ENCODE measurements at regions of chr5 and their contacts with region 1.

Region 1: DNA sequence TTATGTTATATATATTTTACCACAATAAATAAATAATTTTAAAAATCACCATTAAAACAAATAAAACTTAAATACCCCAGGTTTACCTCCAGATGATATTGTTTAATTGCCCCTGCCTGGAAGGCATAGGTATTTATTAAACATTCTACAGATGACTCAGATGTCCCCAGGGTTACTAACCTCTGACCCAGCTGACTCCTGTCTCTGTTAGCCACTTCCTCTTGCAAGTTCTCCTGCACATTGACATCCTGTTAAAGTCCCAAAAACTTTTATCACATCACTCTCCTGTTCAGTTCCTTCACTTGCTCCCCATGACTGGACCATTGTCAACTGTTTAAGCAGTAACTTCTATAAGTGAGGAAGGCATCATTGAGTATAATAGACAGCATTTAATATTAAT is 37.0 kb upstream of the RAB3C start:
- DNase-seq: peak; percentile 17
- ATAC-seq: peak; percentile 67
- H3K4me3 ChIP-seq: no peak overlapping the region
- H3K4me3 Mint-ChIP-seq: peak overlapping the region; percentile 15
- H3K27ac ChIP-seq: no peak overlapping the region
- H3K27ac Mint-ChIP-seq: no peak overlapping the region
- H3K4me1 ChIP-seq: peaks cover 34 to 38% of the 10 kb centered on the region in 2 donors
- H3K4me1 Mint-ChIP-seq: peaks cover 42% of the 10 kb centered on the region
- H3K27me3 ChIP-seq: no peaks in the 10 kb centered on the region
- H3K27me3 Mint-ChIP-seq: no peaks in the 10 kb centered on the region
- CTCF ChIP-seq: no peak

Region 2: GRCh38 chr5:58300361-58300895 is 245.5 kb before region 1 on chr5:
- CTCF ChIA-PET with region 1: no interaction called
- POLR2A ChIA-PET with region 1: no interaction called
- intact Hi-C with region 1: no loop called
- DNase-seq: no peak
- ATAC-seq: no peak
- H3K4me3 ChIP-seq: no peak overlapping the region
- H3K4me3 Mint-ChIP-seq: no peak overlapping the region
- H3K27ac ChIP-seq: no peak overlapping the region
- H3K27ac Mint-ChIP-seq: no peak overlapping the region
- H3K4me1 ChIP-seq: no peaks in the 10 kb centered on the region
- H3K4me1 Mint-ChIP-seq: no peaks in the 10 kb centered on the region
- H3K27me3 ChIP-seq: peaks cover 0 to 2% (median 0%) of the 10 kb centered on the region in 4 experiments
- H3K27me3 Mint-ChIP-seq: no peaks in the 10 kb centered on the region
- CTCF ChIP-seq: no peak

Region 3: GRCh38 chr5:58357121-58357520 is 188.8 kb before region 1 on chr5:
- CTCF ChIA-PET with region 1: no interaction called
- POLR2A ChIA-PET with region 1: no interaction called
- intact Hi-C with region 1: no loop called
- DNase-seq: no peak
- ATAC-seq: no peak
- H3K4me3 ChIP-seq: no peak overlapping the region
- H3K4me3 Mint-ChIP-seq: no peak overlapping the region
- H3K27ac ChIP-seq: no peak overlapping the region
- H3K27ac Mint-ChIP-seq: no peak overlapping the region
- H3K4me1 ChIP-seq: no peaks in the 10 kb centered on the region
- H3K4me1 Mint-ChIP-seq: no peaks in the 10 kb centered on the region
- H3K27me3 ChIP-seq: no peaks in the 10 kb centered on the region
- H3K27me3 Mint-ChIP-seq: no peaks in the 10 kb centered on the region
- CTCF ChIP-seq: no peak

Region 4: DNA sequence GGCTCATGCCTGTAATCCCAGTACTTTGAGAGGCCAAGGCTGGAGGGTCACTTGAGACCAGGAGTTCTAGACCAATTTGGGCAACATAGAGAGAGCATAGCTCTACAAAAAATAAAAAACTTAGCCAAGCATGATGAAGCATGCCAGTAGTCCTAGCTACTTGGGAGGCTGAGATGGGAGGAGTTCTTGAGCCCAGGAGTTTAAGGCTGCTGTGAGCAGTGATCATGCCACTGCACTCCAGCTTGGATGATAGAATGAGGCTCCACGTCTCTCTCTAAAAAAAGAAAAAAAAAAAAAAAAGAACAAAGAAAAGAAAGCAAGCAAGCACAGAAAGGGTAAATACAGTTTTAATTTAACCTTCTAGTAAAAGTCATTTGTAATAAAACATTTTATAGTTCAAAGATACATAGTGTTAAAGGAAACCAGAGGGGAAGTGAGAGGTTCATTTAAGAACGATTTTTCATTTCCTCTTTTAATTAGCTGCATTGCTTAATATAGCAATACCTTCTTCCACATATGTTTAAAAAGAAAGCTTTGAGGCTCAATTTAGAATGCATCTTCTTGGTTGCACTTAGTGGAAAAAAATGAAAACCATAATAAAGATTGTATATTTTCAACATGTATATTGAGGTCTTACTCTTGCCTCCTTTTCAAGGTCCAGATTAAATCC is 39.8 kb before region 1 on chr5:
- CTCF ChIA-PET with region 1: no interaction called
- POLR2A ChIA-PET with region 1: no interaction called
- intact Hi-C with region 1: loop called (anchors 5 kb)
- DNase-seq: peak; percentile 55
- ATAC-seq: peak; percentile 92
- H3K4me3 ChIP-seq: peak overlapping the region in 4 of 5 experiments; percentile 12 to 57 (median 18)
- H3K4me3 Mint-ChIP-seq: peak overlapping the region; percentile 64
- H3K27ac ChIP-seq: peak overlapping the region; percentile 47 to 61
- H3K27ac Mint-ChIP-seq: peak overlapping the region; percentile 81
- H3K4me1 ChIP-seq: peaks cover 62 to 63% of the 10 kb centered on the region in 2 donors
- H3K4me1 Mint-ChIP-seq: peaks cover 76% of the 10 kb centered on the region
- H3K27me3 ChIP-seq: no peaks in the 10 kb centered on the region
- H3K27me3 Mint-ChIP-seq: no peaks in the 10 kb centered on the region
- CTCF ChIP-seq: no peak

Region 5: DNA sequence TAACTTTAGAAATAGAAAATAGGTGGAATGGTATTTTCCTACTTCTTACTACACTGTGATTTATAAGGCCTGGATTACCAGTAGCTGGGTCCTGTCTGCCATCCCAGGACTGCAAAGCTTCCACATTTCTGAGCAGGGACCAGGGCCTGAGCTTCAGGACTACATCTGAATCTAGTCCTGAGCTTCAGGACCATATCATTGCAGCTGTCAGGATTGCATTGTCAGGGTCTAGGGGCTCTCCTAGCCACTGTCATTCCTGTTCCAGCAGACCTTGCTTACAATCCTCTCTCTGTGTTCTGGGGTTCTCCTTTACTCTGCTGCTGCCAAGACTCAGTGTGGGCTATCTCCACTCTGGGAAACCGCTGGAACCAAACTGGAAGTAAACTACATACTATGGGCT is 53.3 kb after region 1 on chr5:
- CTCF ChIA-PET with region 1: no interaction called
- POLR2A ChIA-PET with region 1: no interaction called
- intact Hi-C with region 1: no loop called
- DNase-seq: no peak
- ATAC-seq: no peak
- H3K4me3 ChIP-seq: no peak overlapping the region
- H3K4me3 Mint-ChIP-seq: no peak overlapping the region
- H3K27ac ChIP-seq: no peak overlapping the region
- H3K27ac Mint-ChIP-seq: no peak overlapping the region
- H3K4me1 ChIP-seq: peaks cover 0 to 2% of the 10 kb centered on the region in 2 donors
- H3K4me1 Mint-ChIP-seq: peaks cover 12% of the 10 kb centered on the region
- H3K27me3 ChIP-seq: no peaks in the 10 kb centered on the region
- H3K27me3 Mint-ChIP-seq: peaks cover 3% of the 10 kb centered on the region
- CTCF ChIP-seq: no peak

Measured in B cell (primary cell).